PC-9 (cell line): ENCODE measurements at regions of chr4 and their contacts with region 1.

Region 1: DNA sequence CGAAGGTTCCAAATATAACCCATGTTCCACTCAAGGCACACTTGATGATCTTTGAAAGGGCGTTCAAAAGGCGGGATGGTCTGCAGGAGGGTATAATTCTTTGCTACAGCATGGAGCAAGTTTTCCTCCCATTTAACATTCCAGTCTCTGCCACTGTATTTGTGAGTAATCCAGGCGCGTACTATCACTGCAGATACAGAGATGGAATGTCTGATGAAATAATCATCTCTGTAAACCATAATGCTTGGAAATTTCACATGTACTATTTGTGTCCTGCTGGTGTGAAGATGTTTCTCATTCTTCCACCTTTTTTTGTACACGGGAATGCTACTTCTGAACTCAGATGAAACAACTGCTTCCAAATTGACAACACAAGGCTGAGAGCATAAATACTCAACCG is 15.5 kb downstream of the SEL1L3 start:
- DNase-seq: no peak
- H3K4me3 ChIP-seq: no peak overlapping the region
- H3K27ac ChIP-seq: no peak overlapping the region
- H3K4me1 ChIP-seq: no peaks in the 10 kb centered on the region
- H3K27me3 ChIP-seq: no peaks in the 10 kb centered on the region
- CTCF ChIP-seq: no peak

Region 2: GRCh38 chr4:24889991-24890390 is 957.3 kb before region 1 on chr4:
- CTCF ChIA-PET with region 1: no interaction called
- POLR2A ChIA-PET with region 1: no interaction called
- intact Hi-C with region 1: no loop called
- DNase-seq: no peak
- H3K4me3 ChIP-seq: no peak overlapping the region
- H3K27ac ChIP-seq: no peak overlapping the region
- H3K4me1 ChIP-seq: no peaks in the 10 kb centered on the region
- H3K27me3 ChIP-seq: no peaks in the 10 kb centered on the region
- CTCF ChIP-seq: no peak

Region 3: GRCh38 chr4:26140150-26140898 is 293.0 kb after region 1 on chr4:
- CTCF ChIA-PET with region 1: no interaction called
- POLR2A ChIA-PET with region 1: no interaction called
- intact Hi-C with region 1: no loop called
- DNase-seq: no peak
- H3K4me3 ChIP-seq: no peak overlapping the region
- H3K27ac ChIP-seq: no peak overlapping the region
- H3K4me1 ChIP-seq: no peaks in the 10 kb centered on the region; the same call in 1 of the 2 replicates
- H3K27me3 ChIP-seq: no peaks in the 10 kb centered on the region
- CTCF ChIP-seq: no peak

Region 4: GRCh38 chr4:26451597-26451996 is 604.3 kb after region 1 on chr4:
- CTCF ChIA-PET with region 1: interaction called, 11 read pairs
- POLR2A ChIA-PET with region 1: no interaction called
- intact Hi-C with region 1: no loop called
- DNase-seq: no peak
- H3K4me3 ChIP-seq: no peak overlapping the region
- H3K27ac ChIP-seq: no peak overlapping the region
- H3K4me1 ChIP-seq: no peaks in the 10 kb centered on the region
- H3K27me3 ChIP-seq: no peaks in the 10 kb centered on the region
- CTCF ChIP-seq: no peak